Caco-2 (cell line): ENCODE measurements at regions of chr22 and their contacts with region 1.

Region 1: GRCh38 chr22:32985899-32986765 is 72.0 kb downstream of the SYN3 start:
- DNase-seq: peak; percentile 77 to 79
- H3K4me3 ChIP-seq: no peak overlapping the region
- H3K4me3 Mint-ChIP-seq: no peak overlapping the region
- H3K27ac Mint-ChIP-seq: peak overlapping the region; percentile 46
- H3K4me1 ChIP-seq: no peaks in the 10 kb centered on the region; the same call in 1 of the 2 replicates
- H3K4me1 Mint-ChIP-seq: peaks cover 13% of the 10 kb centered on the region
- H3K27me3 ChIP-seq: no peaks in the 10 kb centered on the region
- H3K27me3 Mint-ChIP-seq: peaks cover 5% of the 10 kb centered on the region
- CTCF ChIP-seq: peak; percentile 77 to 89

Region 2: GRCh38 chr22:32887324-32887980 is 98.7 kb before region 1 on chr22:
- CTCF ChIA-PET with region 1: no interaction called
- POLR2A ChIA-PET with region 1: interaction called, 21 read pairs
- intact Hi-C with region 1: no loop called
- DNase-seq: no peak
- H3K4me3 ChIP-seq: no peak overlapping the region
- H3K4me3 Mint-ChIP-seq: no peak overlapping the region
- H3K27ac Mint-ChIP-seq: no peak overlapping the region
- H3K4me1 ChIP-seq: no peaks in the 10 kb centered on the region
- H3K4me1 Mint-ChIP-seq: no peaks in the 10 kb centered on the region
- H3K27me3 ChIP-seq: no peaks in the 10 kb centered on the region
- H3K27me3 Mint-ChIP-seq: peaks cover 2% of the 10 kb centered on the region
- CTCF ChIP-seq: no peak

Region 3: DNA sequence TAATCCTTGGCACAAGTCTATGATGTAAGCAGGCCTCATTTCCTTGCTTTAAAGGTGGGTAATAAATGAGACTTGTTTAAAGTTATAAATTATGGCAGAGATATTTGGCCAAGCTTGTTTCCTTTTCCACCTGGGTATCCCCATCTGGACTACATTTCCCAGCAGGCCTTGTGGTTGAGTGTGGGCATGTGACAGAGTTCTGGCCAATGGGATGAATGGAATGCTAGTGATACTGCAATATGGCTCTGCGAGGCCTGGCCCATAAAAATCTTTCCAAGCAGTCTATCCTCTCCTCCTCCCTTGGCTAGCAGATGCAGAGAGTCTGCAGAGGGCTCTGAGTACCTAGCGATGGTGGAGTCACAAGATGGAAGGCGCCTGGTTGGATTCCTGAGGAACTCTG is 82.1 kb before region 1 on chr22:
- CTCF ChIA-PET with region 1: no interaction called
- POLR2A ChIA-PET with region 1: no interaction called
- intact Hi-C with region 1: no loop called
- DNase-seq: peak; percentile 61 to 63
- H3K4me3 ChIP-seq: no peak overlapping the region
- H3K4me3 Mint-ChIP-seq: no peak overlapping the region
- H3K27ac Mint-ChIP-seq: no peak overlapping the region
- H3K4me1 ChIP-seq: no peaks in the 10 kb centered on the region
- H3K4me1 Mint-ChIP-seq: no peaks in the 10 kb centered on the region
- H3K27me3 ChIP-seq: no peaks in the 10 kb centered on the region
- H3K27me3 Mint-ChIP-seq: no peaks in the 10 kb centered on the region
- CTCF ChIP-seq: no peak

Region 4: DNA sequence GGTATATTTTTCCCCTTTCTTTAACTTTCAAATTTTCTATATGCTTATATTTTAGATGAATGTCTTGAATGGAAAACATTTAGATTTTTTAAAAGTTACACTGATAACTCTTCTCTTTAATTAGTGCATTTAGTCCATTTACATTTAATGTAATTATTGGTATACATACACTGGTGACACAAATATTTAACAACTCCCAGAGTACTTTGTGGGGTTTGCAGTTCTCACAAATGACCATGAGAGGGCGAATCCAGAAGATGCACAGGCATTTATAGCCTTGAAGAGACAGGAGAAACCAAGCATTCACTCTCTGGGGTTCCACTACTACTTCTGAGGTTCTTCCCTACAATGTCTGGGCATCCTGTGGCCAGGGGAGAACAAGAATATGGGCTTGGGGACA is 59.5 kb before region 1 on chr22:
- CTCF ChIA-PET with region 1: interaction called, 3 read pairs
- POLR2A ChIA-PET with region 1: no interaction called
- intact Hi-C with region 1: loop called (anchors 1 kb)
- DNase-seq: peak; percentile 34 to 41
- H3K4me3 ChIP-seq: no peak overlapping the region
- H3K4me3 Mint-ChIP-seq: no peak overlapping the region
- H3K27ac Mint-ChIP-seq: no peak overlapping the region
- H3K4me1 ChIP-seq: no peaks in the 10 kb centered on the region
- H3K4me1 Mint-ChIP-seq: no peaks in the 10 kb centered on the region
- H3K27me3 ChIP-seq: no peaks in the 10 kb centered on the region; the same call in 1 of the 2 replicates
- H3K27me3 Mint-ChIP-seq: peaks cover 2% of the 10 kb centered on the region
- CTCF ChIP-seq: peak; percentile 54 to 68

Region 5: DNA sequence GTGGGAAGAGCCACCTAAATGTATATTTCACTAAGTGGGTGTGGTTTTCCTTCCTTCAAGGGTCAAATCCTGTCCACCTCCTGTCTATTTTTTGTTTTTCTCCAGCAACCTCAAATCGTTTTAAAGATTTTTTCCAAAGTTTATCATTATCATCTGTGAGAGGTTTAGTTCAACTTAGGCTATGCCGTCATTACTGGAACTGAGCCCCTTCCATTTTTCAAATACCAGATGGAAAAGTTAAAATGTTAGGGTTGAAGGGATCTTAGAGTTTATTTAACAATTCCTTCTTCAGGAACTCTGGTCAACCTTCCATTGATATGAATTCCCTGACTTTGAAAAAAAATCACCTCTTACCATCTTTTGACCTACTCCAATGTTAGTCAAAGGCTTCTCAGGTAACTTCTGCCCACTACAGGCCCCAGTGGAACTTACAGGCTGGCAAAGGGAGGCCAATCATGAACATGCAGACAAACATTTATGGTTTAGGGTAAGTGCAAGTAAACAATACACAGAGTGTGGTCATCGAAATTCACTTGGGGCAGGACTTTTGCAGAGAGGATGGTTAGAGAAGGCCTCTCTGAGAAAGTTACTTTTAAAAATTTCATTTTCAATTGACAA is 26.8 kb after region 1 on chr22:
- CTCF ChIA-PET with region 1: no interaction called
- POLR2A ChIA-PET with region 1: no interaction called
- intact Hi-C with region 1: no loop called
- DNase-seq: no peak
- H3K4me3 ChIP-seq: no peak overlapping the region
- H3K4me3 Mint-ChIP-seq: no peak overlapping the region
- H3K27ac Mint-ChIP-seq: no peak overlapping the region
- H3K4me1 ChIP-seq: no peaks in the 10 kb centered on the region
- H3K4me1 Mint-ChIP-seq: no peaks in the 10 kb centered on the region
- H3K27me3 ChIP-seq: no peaks in the 10 kb centered on the region
- H3K27me3 Mint-ChIP-seq: peaks cover 10% of the 10 kb centered on the region
- CTCF ChIP-seq: no peak

Region 6: GRCh38 chr22:33038131-33038772 is 52.1 kb after region 1 on chr22:
- CTCF ChIA-PET with region 1: no interaction called
- POLR2A ChIA-PET with region 1: no interaction called
- intact Hi-C with region 1: no loop called
- DNase-seq: no peak
- H3K4me3 ChIP-seq: no peak overlapping the region
- H3K4me3 Mint-ChIP-seq: no peak overlapping the region
- H3K27ac Mint-ChIP-seq: no peak overlapping the region
- H3K4me1 ChIP-seq: no peaks in the 10 kb centered on the region
- H3K4me1 Mint-ChIP-seq: no peaks in the 10 kb centered on the region
- H3K27me3 ChIP-seq: no peaks in the 10 kb centered on the region
- H3K27me3 Mint-ChIP-seq: peaks cover 14% of the 10 kb centered on the region
- CTCF ChIP-seq: no peak